ENCODE measurements at regions of chr19 and their contacts with region 1.

Region 1: DNA sequence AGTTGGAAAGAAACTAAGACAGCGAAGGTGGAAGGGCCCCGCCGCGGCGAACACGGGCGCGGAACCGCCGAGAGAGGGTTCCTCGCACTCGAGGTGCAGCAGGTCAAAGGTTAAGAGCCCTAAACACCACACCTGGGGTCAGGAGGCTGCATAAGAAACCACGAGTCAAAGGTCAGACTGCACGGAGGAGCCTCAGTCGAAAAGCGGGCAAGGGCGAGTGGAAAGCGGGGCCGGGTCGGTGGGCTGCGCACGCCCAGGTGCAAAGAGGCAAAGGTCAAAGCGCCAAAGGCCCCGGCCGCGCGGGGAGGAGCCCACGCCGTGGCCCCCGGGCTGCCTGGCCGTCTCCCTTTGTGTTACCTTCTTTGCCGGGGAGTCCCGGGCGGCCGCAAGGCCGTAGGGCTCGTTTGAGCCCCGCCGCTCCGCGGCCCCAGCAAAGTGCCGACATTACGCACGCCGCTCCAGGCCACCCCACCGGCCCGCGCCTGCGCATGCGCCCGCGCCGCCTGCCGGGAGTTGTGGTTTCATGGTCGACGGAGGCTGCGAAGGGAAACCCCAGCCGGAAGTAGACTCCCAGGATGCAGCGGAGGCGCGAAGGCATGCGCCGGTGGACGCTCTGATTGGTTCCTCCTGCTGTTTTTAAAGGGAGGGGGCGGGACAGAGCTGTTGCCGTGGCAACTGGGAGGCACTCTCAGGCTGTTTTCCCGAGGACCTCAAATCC is at the start of gene POLRMT:
- DNase-seq: peak; percentile 99
- H3K4me3 ChIP-seq: peak within 1 kb of the TSS; percentile 92
- H3K27ac ChIP-seq: peak within 1 kb of the TSS; percentile 87
- H3K4me1 ChIP-seq: no peaks in the 10 kb centered on the region
- H3K27me3 ChIP-seq: no peaks in the 10 kb centered on the region
- CTCF ChIP-seq: no peak
- total RNA-seq, gene POLRMT: 100 and 107 TPM in 2 replicates

Region 2: DNA sequence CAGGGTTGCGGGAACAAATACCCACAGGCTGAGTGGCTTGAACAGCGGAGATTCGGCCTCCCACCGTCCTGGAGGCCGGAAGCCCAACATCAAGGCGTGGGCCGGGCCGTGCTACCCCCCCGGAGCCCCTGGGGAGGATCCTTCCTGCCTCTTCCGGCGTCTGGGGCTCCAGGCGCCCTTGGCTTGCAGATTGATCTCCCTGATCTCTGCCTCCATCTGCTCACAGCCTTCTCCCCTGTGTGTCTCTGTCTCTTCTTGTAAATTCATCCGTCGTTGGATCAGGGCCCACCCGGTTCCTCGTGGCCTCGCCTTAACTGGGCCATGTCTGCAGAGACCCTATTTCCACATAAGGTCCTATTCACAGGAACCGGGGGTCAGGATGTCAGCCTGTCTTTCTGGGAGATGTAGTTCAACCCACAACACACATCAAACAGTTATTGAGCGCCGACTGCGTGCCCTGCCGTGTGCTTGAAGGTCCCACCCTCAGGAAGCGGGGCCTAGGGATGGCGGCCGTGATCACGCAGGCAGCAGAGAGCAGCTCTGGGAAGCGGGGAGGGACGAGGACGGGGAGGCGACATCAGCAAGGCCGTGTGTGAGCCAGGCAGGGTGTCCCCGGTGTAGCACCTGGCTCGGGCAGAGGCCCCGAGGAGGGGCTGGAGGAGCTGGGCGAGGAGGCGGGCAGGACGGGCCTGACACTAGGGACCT is 22.3 kb before region 1 on chr19:
- CTCF ChIA-PET with region 1: no interaction called
- POLR2A ChIA-PET with region 1: no interaction called
- intact Hi-C with region 1: loop called (anchors 2 kb)
- DNase-seq: peak; percentile 98
- H3K4me3 ChIP-seq: peak overlapping the region; percentile 32
- H3K27ac ChIP-seq: peak overlapping the region; percentile 84
- H3K4me1 ChIP-seq: peaks cover 33% of the 10 kb centered on the region
- H3K27me3 ChIP-seq: no peaks in the 10 kb centered on the region
- CTCF ChIP-seq: no peak

Measured in A673 (cell line).